GM10248 (cell line): ENCODE measurements at regions of chr9 and their contacts with region 1.

Region 1: DNA sequence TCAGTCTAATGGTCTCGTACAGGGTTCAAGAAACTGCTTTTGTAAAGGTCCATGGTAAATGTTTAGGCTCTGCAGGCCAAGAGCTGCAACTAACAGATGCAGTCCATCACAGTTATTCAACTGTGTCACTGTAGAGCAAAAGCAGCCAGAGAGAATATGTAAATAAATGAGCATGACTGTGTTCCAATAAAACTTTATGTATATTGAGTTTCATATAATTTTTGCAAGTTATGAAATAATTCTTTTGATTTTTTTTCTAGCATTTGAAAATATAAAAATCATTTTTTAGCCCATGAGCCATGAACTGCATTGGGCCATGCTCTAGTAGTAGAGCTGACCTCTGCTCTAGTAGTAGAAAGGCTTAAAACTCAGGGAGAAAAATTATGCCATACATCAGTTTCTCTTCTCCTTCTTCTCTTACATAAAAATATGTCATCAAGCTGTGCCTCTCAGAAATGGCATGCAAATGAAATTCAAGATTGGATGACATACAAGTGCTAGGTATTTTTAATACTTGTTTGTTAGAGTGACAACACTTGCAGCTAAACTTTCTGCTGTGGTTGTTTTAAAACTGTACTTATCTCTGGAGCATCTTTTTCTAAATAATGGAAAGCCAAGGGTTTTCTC is 42.3 kb upstream of the TMOD1 start:
- DNase-seq: no peak
- CTCF ChIP-seq: no peak

Region 2: GRCh38 chr9:97382099-97382718 is 77.0 kb before region 1 on chr9:
- CTCF ChIA-PET with region 1: no interaction called
- POLR2A ChIA-PET with region 1: no interaction called
- DNase-seq: no peak
- CTCF ChIP-seq: no peak

Region 3: DNA sequence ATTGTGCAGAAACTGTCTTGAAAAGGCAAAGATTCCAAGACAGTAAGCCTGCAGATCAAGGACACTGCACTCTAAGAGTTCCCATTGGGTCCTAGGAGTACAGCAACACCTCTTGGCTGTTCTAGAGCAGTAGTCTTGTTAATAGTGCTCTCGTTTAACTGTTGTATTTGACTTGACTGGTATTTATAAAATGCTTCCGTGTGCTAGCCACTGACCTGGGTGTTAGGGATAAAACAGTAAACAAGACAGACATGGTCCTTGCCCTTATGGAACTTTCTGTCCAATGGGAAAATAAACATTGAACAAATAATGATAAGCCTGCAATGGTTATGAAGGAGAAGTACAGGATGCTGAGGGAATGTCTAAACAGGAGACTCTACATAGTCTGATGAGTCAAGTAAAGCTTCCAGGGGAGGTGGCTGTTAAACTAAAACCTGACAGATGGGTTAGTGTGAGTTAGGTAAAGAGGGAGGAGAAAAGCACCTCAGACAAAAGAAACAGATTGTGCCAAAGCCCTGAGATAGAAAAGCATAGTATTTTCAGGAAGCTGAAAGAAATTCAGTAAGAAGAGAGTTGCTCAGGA is 14.0 kb before region 1 on chr9:
- CTCF ChIA-PET with region 1: interaction called, 15 read pairs
- POLR2A ChIA-PET with region 1: no interaction called
- DNase-seq: no peak
- CTCF ChIP-seq: no peak

Region 4: DNA sequence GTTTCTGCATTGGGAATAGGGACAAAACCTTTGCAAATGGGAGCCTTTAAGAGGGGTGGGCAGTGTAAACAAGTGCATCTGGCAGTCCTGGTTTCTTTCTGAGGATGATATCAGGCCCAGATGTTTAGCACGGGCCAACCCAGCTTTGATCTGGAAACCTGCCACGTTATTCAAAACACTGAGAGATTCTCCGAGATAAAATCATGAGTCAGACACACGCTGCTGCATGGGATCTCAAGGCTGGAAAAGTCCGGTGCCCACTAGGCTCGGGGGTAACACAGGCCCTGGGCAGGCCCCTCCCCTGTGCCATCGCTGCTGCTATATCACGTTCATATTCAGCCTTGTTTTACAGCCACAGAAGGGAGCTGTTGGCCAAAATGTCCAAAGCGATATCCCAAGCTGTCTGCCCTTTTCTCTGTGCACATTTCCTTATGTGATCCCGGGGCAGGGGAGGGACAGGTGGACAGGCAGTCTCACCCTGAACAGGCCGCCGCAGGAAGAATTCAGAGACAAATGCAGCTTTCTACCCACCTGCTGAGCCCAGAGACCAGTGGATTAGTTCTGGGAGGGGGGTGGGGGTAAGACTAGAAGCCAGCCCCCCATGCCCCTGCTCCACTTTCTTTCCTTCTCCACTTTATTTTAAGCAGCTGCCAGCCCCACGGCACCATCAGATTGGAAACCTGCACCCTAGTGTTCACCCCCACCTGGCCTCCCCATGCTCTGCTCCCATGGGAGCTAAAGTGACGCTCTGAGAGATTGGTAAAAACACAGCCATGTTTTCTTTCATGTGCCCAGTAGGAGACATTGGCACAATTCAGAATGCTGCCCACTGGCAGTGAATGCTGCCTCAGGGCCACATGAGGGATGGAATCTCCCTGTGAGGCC is 105.3 kb after region 1 on chr9:
- CTCF ChIA-PET with region 1: no interaction called
- POLR2A ChIA-PET with region 1: no interaction called
- DNase-seq: no peak
- CTCF ChIP-seq: no peak

Region 5: GRCh38 chr9:97675655-97676054 is 216.4 kb after region 1 on chr9:
- CTCF ChIA-PET with region 1: no interaction called
- POLR2A ChIA-PET with region 1: no interaction called
- DNase-seq: no peak
- CTCF ChIP-seq: no peak